Activated naive CD4-positive, alpha-beta T cell treated with anti-CD3 and anti-CD28 coated beads for 36 hours (primary cell): ENCODE measurements at regions of chr11 and their contacts with region 1.

Region 1: DNA sequence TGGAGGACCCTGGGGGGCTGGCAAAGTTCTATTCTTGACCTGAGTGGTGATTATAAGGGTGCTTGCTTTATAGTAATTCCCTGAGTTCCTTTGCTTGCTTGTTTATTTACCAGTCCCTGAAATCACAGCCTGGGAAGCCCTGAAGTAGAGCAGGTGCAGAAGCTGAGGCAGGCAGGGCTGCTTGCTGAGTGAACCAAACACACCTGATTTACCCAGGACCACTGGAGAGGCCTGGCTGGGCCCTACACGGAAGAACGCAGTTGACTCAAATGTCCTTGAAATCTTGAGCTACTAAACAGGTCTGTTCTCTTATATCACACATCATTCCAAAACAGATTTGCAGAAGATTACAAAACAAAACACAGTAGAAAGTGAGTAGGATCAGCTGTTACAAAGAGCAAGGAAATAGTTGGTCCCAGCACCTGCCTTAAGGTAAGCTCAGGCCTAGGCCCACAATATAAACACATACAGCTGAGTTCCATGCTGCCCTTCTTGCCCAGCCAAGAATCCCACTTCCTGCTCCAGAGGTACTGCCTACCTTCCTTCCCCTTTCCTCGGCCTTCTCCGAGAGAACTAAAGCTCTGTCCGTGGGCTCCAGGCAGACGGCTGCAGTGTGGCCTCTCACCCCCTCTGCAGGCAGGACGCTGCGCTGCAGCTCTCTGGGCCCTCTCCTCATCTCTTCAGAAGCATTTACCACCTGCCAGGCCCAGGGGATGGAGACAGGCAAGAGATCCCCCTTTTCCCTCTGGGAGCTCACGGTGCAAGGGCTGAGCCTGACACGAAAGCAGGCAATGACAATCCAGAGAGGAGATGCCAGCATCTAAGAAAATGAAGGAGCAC is 46.1 kb upstream of the SCUBE2 start:
- DNase-seq: peak; percentile 85
- H3K4me3 Mint-ChIP-seq: no peak overlapping the region
- H3K27ac Mint-ChIP-seq: peak overlapping the region; percentile 77
- H3K4me1 Mint-ChIP-seq: peaks cover 33% of the 10 kb centered on the region
- H3K27me3 Mint-ChIP-seq: no peaks in the 10 kb centered on the region

Region 2: DNA sequence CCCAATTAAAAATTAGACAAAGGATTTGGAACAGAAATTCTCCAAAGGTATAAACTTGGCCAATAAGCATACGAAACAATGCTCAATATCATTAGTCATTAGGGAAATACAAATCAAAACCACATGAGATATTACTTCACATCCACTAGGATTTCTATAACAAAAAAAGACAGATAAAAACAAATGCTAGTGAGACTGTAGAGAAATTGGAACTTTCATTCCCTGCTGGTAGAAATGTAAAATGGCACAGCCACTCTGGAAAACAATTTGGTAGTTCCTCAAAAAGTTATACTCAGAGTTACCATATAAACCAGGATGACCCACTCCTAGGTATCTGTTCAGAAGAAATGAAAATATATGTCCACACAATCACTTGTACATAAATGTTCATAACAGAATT is 383.3 kb before region 1 on chr11:
- CTCF ChIA-PET with region 1: no interaction called
- intact Hi-C with region 1: no loop called
- DNase-seq: no peak
- H3K4me3 Mint-ChIP-seq: no peak overlapping the region
- H3K27ac Mint-ChIP-seq: no peak overlapping the region
- H3K4me1 Mint-ChIP-seq: no peaks in the 10 kb centered on the region
- H3K27me3 Mint-ChIP-seq: peaks cover 7% of the 10 kb centered on the region

Region 3: DNA sequence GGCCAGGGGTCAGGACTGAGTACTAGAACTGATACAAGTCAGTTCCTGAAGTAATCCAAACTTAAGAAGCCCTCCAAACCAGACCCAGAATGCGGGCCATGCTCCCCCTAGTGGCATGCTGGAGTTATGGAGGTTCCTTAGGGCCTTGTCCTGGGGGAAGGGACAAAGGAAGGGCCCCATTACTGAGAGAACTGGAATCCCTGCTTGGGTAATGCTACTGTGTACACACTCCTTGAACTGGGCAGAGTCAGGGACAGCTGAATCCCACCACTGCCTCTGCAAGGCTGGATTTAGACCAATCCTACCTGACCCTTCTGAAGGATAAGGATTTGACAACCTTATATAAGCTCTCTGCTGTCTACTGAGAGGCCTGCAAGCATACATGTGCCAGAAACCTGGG is 323.9 kb before region 1 on chr11:
- CTCF ChIA-PET with region 1: no interaction called
- intact Hi-C with region 1: loop called (anchors 10 kb)
- DNase-seq: peak; percentile 67
- H3K4me3 Mint-ChIP-seq: no peak overlapping the region
- H3K27ac Mint-ChIP-seq: no peak overlapping the region
- H3K4me1 Mint-ChIP-seq: peaks cover 7% of the 10 kb centered on the region
- H3K27me3 Mint-ChIP-seq: peaks cover 14% of the 10 kb centered on the region

Region 4: GRCh38 chr11:8863838-8864237 is 273.7 kb before region 1 on chr11:
- CTCF ChIA-PET with region 1: no interaction called
- intact Hi-C with region 1: no loop called
- DNase-seq: no peak
- H3K4me3 Mint-ChIP-seq: no peak overlapping the region
- H3K27ac Mint-ChIP-seq: no peak overlapping the region
- H3K4me1 Mint-ChIP-seq: no peaks in the 10 kb centered on the region
- H3K27me3 Mint-ChIP-seq: peaks cover 27% of the 10 kb centered on the region

Region 5: GRCh38 chr11:9003573-9004309 is 133.8 kb before region 1 on chr11 and contains the start of gene NRIP3:
- CTCF ChIA-PET with region 1: interaction called, 11 read pairs
- intact Hi-C with region 1: loop called (anchors 1 kb)
- DNase-seq: peak; percentile 67
- H3K4me3 Mint-ChIP-seq: peak within 1 kb of the TSS; percentile 68
- H3K27ac Mint-ChIP-seq: no peak within 1 kb of the TSS
- H3K4me1 Mint-ChIP-seq: peaks cover 24% of the 10 kb centered on the region
- H3K27me3 Mint-ChIP-seq: peaks cover 33% of the 10 kb centered on the region
- total RNA-seq, gene NRIP3: 3.0 to 3.5 TPM

Region 6: GRCh38 chr11:9092853-9093778 is 44.4 kb before region 1 on chr11:
- CTCF ChIA-PET with region 1: interaction called, 25 read pairs
- intact Hi-C with region 1: loop called (anchors 1 kb)
- DNase-seq: no peak
- H3K4me3 Mint-ChIP-seq: peak overlapping the region; percentile 11
- H3K27ac Mint-ChIP-seq: no peak overlapping the region
- H3K4me1 Mint-ChIP-seq: peaks cover 2% of the 10 kb centered on the region
- H3K27me3 Mint-ChIP-seq: peaks cover 57% of the 10 kb centered on the region

Region 7: GRCh38 chr11:9180784-9181183 is 43.3 kb after region 1 on chr11:
- CTCF ChIA-PET with region 1: no interaction called
- intact Hi-C with region 1: no loop called
- DNase-seq: no peak
- H3K4me3 Mint-ChIP-seq: no peak overlapping the region
- H3K27ac Mint-ChIP-seq: no peak overlapping the region
- H3K4me1 Mint-ChIP-seq: peaks cover 5% of the 10 kb centered on the region
- H3K27me3 Mint-ChIP-seq: no peaks in the 10 kb centered on the region

Region 8: GRCh38 chr11:9265211-9266131 is 128.0 kb after region 1 on chr11 and contains the start of gene DENND5A:
- CTCF ChIA-PET with region 1: no interaction called
- intact Hi-C with region 1: loop called (anchors 1 kb)
- DNase-seq: peak; percentile 62
- H3K4me3 Mint-ChIP-seq: peak within 1 kb of the TSS; percentile 84
- H3K27ac Mint-ChIP-seq: peak within 1 kb of the TSS; percentile 95
- H3K4me1 Mint-ChIP-seq: peaks cover 30% of the 10 kb centered on the region
- H3K27me3 Mint-ChIP-seq: peaks cover 3% of the 10 kb centered on the region
- total RNA-seq, gene DENND5A: 62.3 to 63.5 TPM